ENCODE measurements at regions of chr7 and their contacts with region 1.

Region 1: DNA sequence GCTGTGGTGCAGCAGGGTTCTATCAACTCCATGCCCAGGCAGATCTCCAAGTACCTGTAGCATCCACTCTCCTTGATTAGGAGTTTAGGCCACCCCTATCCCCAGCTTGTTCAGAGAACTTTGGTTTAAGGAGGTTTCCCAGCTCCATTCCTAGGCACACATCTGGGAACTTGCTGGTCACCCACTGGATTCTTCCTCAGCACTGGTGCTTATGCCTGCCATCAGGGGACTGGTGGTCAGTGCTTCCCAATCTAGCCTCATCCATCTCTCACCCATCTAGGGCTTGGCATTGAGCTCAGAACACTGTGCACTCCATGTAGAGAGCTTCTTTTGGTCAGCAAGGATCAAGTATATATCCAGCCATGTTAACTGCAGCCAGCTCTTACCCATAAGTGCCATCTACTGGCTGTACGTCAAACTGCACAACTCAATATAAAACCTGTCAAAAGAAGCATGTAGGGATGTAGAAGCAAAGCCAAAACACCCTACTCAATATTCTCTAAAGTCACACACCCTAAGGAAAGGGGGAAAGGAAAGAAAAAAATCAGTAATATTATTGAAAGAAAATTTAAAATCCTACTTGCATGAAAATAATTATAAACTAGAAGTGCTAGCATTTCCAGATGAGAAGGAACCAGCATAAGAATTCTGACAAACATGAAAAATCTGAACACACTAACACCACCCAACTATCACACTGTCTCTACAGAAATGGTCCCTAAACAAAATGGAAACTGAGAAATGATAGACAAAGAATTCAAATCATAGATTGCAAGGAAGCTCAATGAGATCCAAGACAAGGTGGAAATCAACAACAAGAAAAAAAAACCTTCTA is 531.2 kb upstream of the STEAP1 start:
- DNase-seq: no peak
- H3K4me3 ChIP-seq: no peak overlapping the region
- H3K27ac ChIP-seq: no peak overlapping the region
- H3K27me3 ChIP-seq: no peaks in the 10 kb centered on the region
- CTCF ChIP-seq: peak; percentile 38

Region 2: DNA sequence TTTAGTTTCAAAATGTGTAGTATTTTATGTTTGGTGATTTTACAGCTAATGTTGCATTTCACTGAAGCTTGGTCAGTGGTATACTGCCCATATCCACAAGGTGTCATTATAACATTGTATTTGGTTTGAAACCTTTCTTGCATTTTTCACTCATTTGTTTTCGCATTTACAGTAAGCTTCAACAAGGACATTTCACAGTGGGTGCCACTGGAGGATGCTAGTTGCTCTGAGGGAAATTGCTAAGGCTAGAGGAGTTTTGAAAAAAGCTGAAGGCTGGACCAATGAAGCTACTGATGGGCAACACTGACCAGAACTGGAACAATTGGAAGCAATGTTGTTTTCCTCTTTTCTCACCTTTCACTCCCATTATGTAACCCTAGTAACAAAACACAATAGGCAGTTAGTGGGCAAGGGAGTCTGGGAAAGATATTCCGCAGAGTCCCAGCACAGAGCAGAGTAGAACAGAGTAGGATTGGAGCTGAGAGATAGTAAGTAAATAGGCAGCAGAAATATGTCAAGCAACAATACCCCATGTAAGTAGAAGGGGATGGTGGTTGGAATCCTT is 1379.6 kb before region 1 on chr7:
- CTCF ChIA-PET with region 1: interaction called, 19 read pairs
- POLR2A ChIA-PET with region 1: no interaction called
- DNase-seq: no peak
- H3K4me3 ChIP-seq: no peak overlapping the region
- H3K27ac ChIP-seq: no peak overlapping the region
- H3K27me3 ChIP-seq: no peaks in the 10 kb centered on the region
- CTCF ChIP-seq: peak; percentile 73

Region 3: DNA sequence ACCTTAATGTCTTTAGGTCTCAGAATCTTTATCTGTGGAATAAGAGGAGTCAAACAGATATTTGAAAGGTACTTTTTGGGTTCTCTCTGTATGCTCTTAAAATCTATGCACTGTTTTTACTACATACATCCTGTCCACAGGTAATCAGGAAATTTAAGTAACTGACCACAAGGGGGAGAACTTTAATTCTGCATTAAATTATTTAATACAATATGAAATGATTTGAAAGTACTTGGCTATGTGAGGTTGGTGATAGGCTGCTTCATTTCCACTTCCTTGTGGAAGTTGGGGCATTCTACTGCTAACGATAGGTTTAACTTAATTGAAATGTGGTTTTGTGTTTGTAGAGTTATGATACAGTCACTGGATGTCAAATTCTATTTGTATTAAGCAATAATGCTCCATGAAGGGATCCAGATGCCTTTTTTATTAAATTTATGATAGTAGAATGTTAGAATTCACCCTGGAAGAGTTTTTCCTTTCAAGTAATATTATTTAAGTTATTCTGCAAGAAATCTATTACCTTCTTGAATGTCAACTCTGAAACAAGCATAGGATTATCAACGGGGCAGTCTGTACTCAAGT is 833.5 kb before region 1 on chr7:
- CTCF ChIA-PET with region 1: interaction called, 10 read pairs
- POLR2A ChIA-PET with region 1: no interaction called
- DNase-seq: no peak
- H3K4me3 ChIP-seq: no peak overlapping the region
- H3K27ac ChIP-seq: no peak overlapping the region
- H3K27me3 ChIP-seq: no peaks in the 10 kb centered on the region
- CTCF ChIP-seq: peak; percentile 44

Measured in AG04450 (cell line).